H1 (cell line): ENCODE measurements at regions of chr6 and their contacts with region 1.

Region 1: DNA sequence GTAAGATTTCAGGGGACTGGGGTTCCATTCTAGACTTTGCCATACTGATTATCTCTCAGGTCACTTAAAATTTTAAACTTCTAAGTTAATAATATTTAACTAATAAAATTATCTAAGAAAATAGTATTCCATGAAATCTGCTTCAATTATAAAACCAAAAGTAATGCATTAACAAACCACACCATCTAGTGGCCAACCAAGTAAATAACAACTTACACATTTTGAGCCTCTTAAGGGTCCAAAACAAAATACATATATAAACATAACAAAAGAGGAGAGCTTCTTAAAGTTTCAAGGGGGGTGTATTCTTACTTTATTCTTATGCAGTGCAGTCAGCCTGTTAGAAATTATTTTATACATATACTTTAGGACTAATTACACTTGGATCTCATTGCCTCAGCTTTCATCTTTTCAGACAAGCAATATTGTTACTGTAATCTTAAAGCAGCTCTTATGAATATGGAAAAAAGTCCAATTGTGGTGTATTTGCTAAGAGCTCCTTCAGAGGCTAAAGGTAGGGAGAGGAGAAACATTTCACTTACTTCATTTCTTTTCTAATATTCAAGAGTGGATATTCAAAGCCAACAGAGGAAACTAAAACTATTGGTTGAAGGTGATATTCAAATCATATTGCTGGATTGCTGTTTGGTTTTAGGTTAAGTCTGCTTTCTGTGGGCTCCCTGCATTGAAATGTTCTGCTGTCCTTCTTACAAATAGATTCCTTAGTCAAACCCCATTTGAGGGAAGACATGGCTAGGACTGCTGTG is 199.7 kb upstream of the SIM1 start:
- DNase-seq: no peak
- H3K4me3 ChIP-seq: no peak overlapping the region
- H3K27ac ChIP-seq: no peak overlapping the region
- H3K4me1 ChIP-seq: peaks cover 0 to 3% (median 0%) of the 10 kb centered on the region in 4 experiments; a peak in 4 of 7 replicates
- H3K27me3 ChIP-seq: no peaks in the 10 kb centered on the region
- CTCF ChIP-seq: peak in 2 of 3 experiments; percentile 11 to 50; a peak in 2 of 4 replicates
- EP300 ChIP-seq: no peak
- POLR2A ChIP-seq: no peak
- RAD21 ChIP-seq: peak in 1 of 2 experiments; percentile 59; a peak in 3 of 4 replicates

Region 2: DNA sequence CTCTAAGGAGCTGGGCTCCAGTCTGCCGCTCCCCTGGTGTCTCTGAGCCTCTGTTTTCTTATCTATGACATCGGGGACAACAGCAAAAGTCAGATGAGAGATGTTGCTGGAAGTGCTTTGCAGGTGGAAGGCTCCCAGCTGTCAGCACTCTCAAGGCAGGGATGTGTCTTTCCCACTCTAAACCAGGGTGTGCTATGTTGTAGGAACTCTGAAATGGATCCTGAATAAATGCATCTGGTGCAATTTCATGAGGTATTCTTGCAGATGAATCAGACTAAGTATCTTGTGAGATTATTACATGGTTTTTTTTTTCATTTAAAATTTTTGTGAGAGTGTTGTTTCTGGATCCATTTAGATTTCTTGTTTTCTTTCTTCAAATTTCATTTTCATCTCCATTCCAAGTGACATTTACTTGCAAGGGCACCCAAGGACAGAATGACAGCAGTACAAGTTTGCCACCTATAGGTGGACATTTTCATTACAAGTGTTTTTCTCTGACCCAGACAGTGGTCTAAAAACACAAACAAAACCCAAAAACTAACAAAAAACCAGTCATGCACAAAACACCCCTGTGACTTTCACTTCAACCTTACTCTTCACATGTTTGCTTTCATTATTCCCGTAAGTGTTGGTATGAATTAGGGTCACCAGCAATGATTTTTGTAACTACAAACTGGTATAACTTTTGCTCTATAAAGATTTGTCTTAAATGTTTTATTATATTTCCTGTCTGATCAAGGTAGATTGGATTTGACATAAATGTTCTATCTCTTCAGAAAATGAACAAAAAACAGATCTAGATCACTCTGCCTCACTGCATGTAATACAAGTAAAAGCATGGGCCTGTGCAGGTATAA is 185.1 kb before region 1 on chr6:
- CTCF ChIA-PET with region 1: interaction called, 10 read pairs
- POLR2A ChIA-PET with region 1: no interaction called
- DNase-seq: no peak
- H3K4me3 ChIP-seq: no peak overlapping the region
- H3K27ac ChIP-seq: no peak overlapping the region
- H3K4me1 ChIP-seq: no peaks in the 10 kb centered on the region
- H3K27me3 ChIP-seq: no peaks in the 10 kb centered on the region
- CTCF ChIP-seq: peak in 2 of 3 experiments; percentile 57 to 70; a peak in 3 of 4 replicates
- EP300 ChIP-seq: no peak
- POLR2A ChIP-seq: no peak
- RAD21 ChIP-seq: peak; percentile 90 to 92